Caco-2 (cell line): ENCODE measurements at regions of chr2 and their contacts with region 1.

Region 1: GRCh38 chr2:219571311-219572236 is at the start of gene OBSL1:
- DNase-seq: peak; percentile 90 to 92
- H3K4me3 ChIP-seq: peak within 1 kb of the TSS; percentile 75
- H3K4me3 Mint-ChIP-seq: peak within 1 kb of the TSS; percentile 62
- H3K27ac Mint-ChIP-seq: peak within 1 kb of the TSS; percentile 42
- H3K4me1 ChIP-seq: peaks cover 22% of the 10 kb centered on the region
- H3K4me1 Mint-ChIP-seq: peaks cover 17% of the 10 kb centered on the region
- H3K27me3 ChIP-seq: no peaks in the 10 kb centered on the region
- H3K27me3 Mint-ChIP-seq: no peaks in the 10 kb centered on the region
- CTCF ChIP-seq: no peak
- total RNA-seq, gene OBSL1: 56.2 and 57.6 TPM in 2 replicates

Region 2: DNA sequence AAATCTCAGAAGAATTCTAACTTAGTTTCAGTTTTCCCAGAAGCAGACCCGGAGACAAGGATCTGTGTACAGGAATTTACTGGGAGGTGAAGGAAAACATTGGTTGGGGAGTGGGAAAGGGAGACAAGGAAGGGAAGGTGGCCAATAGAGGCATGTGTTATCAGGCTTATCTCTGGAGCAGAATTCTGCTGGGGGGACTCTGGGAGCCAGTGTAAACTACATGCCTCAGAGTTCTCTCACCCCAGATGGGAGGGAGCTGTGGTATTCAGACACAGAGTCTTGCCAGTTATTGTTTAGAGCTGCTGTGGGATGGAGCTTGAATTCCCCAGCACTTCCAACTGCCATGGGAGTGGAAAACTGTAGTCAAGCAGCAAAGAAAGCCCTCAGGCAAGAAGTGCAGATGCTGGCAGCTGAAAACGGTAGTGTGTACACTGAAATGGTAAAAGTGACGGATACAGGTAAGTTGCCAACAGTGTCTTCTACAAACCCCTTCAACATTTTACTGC is 202.8 kb before region 1 on chr2:
- CTCF ChIA-PET with region 1: no interaction called
- POLR2A ChIA-PET with region 1: no interaction called
- intact Hi-C with region 1: no loop called
- DNase-seq: peak; percentile 54 to 86
- H3K4me3 ChIP-seq: no peak overlapping the region
- H3K4me3 Mint-ChIP-seq: peak overlapping the region; percentile 14
- H3K27ac Mint-ChIP-seq: peak overlapping the region; percentile 25
- H3K4me1 ChIP-seq: peaks cover 21% of the 10 kb centered on the region
- H3K4me1 Mint-ChIP-seq: peaks cover 20% of the 10 kb centered on the region
- H3K27me3 ChIP-seq: no peaks in the 10 kb centered on the region
- H3K27me3 Mint-ChIP-seq: no peaks in the 10 kb centered on the region
- CTCF ChIP-seq: no peak

Region 3: GRCh38 chr2:219560037-219560892 is 11.3 kb before region 1 on chr2:
- CTCF ChIA-PET with region 1: interaction called, 19 read pairs
- POLR2A ChIA-PET with region 1: interaction called, 3 read pairs
- intact Hi-C with region 1: loop called (anchors 1 kb)
- DNase-seq: peak in 1 of 2 experiments; percentile 33
- H3K4me3 ChIP-seq: no peak overlapping the region
- H3K4me3 Mint-ChIP-seq: no peak overlapping the region
- H3K27ac Mint-ChIP-seq: peak overlapping the region; percentile 64
- H3K4me1 ChIP-seq: peaks cover 25% of the 10 kb centered on the region
- H3K4me1 Mint-ChIP-seq: peaks cover 15% of the 10 kb centered on the region
- H3K27me3 ChIP-seq: no peaks in the 10 kb centered on the region; the same call in 1 of the 2 replicates
- H3K27me3 Mint-ChIP-seq: no peaks in the 10 kb centered on the region
- CTCF ChIP-seq: peak; percentile 75 to 91

Region 4: DNA sequence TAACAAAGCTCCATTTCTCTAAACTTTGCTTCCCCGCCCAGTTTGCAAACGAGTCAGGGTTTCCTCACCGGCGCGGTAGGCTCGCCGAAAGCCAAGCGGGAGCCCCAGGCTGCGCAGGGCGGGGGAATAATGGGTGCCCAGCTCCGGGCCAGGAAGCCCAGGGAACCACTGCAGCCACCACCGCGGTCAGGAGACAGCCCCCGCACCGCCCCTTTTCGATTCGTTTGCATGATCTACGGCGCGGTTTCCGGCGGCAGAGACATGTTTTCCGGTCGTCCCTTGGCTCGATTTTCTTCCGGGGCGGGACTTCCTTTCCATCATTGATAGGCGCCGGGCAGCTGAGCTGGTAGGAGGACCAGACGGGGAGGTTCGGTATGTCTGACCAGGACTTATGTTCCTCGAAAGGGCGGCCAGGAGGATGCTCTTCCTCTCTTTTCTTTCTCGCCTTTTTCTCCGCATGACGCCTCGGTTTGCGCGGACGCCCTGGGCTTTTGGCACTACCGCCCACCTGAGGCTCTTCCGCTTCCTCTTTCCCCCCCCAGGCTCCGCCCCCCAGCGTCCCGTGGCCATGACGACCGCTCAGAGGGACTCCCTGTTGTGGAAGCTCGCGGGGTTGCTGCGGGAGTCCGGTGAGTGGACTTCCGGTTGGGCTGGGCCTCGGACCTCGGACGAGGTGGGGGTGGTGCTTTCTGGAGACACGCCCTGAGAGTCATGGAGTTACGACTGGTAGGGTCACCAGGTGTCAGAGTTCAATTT is 26.2 kb after region 1 on chr2 and contains the start of gene STK11IP:
- CTCF ChIA-PET with region 1: interaction called, 4 read pairs
- POLR2A ChIA-PET with region 1: interaction called, 12 read pairs
- intact Hi-C with region 1: loop called (anchors 1 kb)
- DNase-seq: peak; percentile 97 to 99
- H3K4me3 ChIP-seq: peak within 1 kb of the TSS; percentile 72
- H3K4me3 Mint-ChIP-seq: peak within 1 kb of the TSS; percentile 96
- H3K27ac Mint-ChIP-seq: peak within 1 kb of the TSS; percentile 98
- H3K4me1 ChIP-seq: peaks cover 23% of the 10 kb centered on the region
- H3K4me1 Mint-ChIP-seq: no peaks in the 10 kb centered on the region
- H3K27me3 ChIP-seq: no peaks in the 10 kb centered on the region
- H3K27me3 Mint-ChIP-seq: no peaks in the 10 kb centered on the region
- CTCF ChIP-seq: no peak
- total RNA-seq, gene STK11IP: 21.7 and 24.3 TPM in 2 replicates

Region 5: GRCh38 chr2:219736209-219736608 is 164.6 kb after region 1 on chr2:
- CTCF ChIA-PET with region 1: no interaction called
- POLR2A ChIA-PET with region 1: no interaction called
- intact Hi-C with region 1: no loop called
- DNase-seq: peak in 1 of 2 experiments; percentile 63
- H3K4me3 ChIP-seq: no peak overlapping the region
- H3K4me3 Mint-ChIP-seq: no peak overlapping the region
- H3K27ac Mint-ChIP-seq: no peak overlapping the region
- H3K4me1 ChIP-seq: no peaks in the 10 kb centered on the region
- H3K4me1 Mint-ChIP-seq: no peaks in the 10 kb centered on the region
- H3K27me3 ChIP-seq: no peaks in the 10 kb centered on the region; the same call in 1 of the 2 replicates
- H3K27me3 Mint-ChIP-seq: peaks cover 21% of the 10 kb centered on the region
- CTCF ChIP-seq: peak; percentile 40 to 65